ENCODE measurements at regions of chr12 and their contacts with region 1.

Region 1: GRCh38 chr12:62848421-62848820 is 86.5 kb downstream of the PPM1H start:
- DNase-seq: peak; percentile 28
- H3K4me3 ChIP-seq: no peak overlapping the region
- CTCF ChIP-seq: no peak

Region 2: DNA sequence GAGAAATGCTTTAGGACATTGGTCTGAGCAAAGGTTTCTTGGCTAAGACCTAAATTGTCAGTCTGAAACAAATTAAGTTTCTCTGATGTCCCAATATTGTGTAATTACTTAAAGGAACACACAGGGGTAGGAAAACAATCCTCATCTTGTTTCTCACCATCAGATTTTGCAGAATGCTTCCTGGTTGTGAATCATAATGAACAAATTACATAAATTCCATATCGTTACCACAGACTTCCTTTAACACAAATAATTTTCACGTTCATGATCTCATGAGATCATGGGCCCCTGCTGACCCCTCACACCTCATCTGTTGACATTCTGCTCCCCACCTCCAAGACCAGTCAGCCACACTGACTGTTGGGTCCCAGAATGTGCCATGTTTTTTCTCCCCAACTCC is 187.7 kb before region 1 on chr12:
- CTCF ChIA-PET with region 1: no interaction called
- POLR2A ChIA-PET with region 1: no interaction called
- DNase-seq: peak; percentile 72
- H3K4me3 ChIP-seq: no peak overlapping the region
- CTCF ChIP-seq: no peak

Region 3: DNA sequence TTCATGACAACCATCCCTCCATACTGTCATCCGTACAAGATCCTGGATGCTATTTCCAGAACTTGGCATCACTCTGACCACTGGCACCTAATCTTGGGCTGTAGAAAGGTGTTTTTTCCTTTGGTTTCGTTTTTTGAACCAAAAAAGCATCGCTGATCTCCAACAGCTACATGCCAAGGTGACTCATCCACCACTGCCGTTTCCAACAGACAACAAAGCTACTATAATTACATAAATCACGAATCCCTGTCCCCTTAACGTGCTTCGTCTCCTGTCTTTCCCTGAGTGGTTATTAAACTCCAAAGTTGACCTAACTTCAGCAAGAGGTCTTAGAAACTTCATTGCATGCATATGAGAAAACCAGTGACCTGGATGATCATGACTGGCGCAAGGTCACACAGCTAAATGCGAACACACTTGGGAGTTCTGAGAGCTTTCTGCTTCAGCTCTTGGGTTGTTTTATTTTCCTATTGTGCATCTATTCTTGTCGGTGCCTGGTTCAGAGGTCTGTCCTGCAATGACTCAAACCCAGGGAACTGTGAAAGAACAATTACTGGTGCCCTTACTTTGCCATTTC is 13.4 kb before region 1 on chr12:
- CTCF ChIA-PET with region 1: interaction called, 10 read pairs
- POLR2A ChIA-PET with region 1: interaction called, 3 read pairs
- DNase-seq: no peak
- H3K4me3 ChIP-seq: no peak overlapping the region
- CTCF ChIP-seq: no peak

Measured in AG04449 (cell line).